Common myeloid progenitor, CD34-positive (primary cell): ENCODE measurements at regions of chr17 and their contacts with region 1.

Region 1: GRCh38 chr17:50956750-50957523 is 90.8 kb upstream of the TOB1 start:
- DNase-seq: peak; percentile 51 to 64 (median 55)
- H3K4me3 ChIP-seq: no peak overlapping the region
- H3K27ac ChIP-seq: no peak overlapping the region
- H3K4me1 ChIP-seq: peaks cover 0 to 14% (median 7%) of the 10 kb centered on the region in 4 experiments
- H3K27me3 ChIP-seq: no peaks in the 10 kb centered on the region

Region 2: GRCh38 chr17:50908860-50909764 is 47.8 kb before region 1 on chr17:
- CTCF ChIA-PET with region 1: interaction called, 12 read pairs
- POLR2A ChIA-PET with region 1: no interaction called
- DNase-seq: peak in 2 of 3 donors; percentile 39 to 40
- H3K4me3 ChIP-seq: no peak overlapping the region
- H3K27ac ChIP-seq: no peak overlapping the region
- H3K4me1 ChIP-seq: peaks cover 6 to 33% (median 21%) of the 10 kb centered on the region in 4 experiments
- H3K27me3 ChIP-seq: no peaks in the 10 kb centered on the region

Region 3: GRCh38 chr17:50967795-50968194 is 10.9 kb after region 1 on chr17:
- CTCF ChIA-PET with region 1: interaction called, 16 read pairs
- POLR2A ChIA-PET with region 1: no interaction called
- DNase-seq: no peak
- H3K4me3 ChIP-seq: no peak overlapping the region
- H3K27ac ChIP-seq: no peak overlapping the region
- H3K4me1 ChIP-seq: peaks cover 0 to 9% (median 0%) of the 10 kb centered on the region in 4 experiments
- H3K27me3 ChIP-seq: no peaks in the 10 kb centered on the region